ENCODE measurements at regions of chr17 and their contacts with region 1.

Region 1: GRCh38 chr17:20009302-20010098 is at the start of gene SPECC1:
- DNase-seq: peak; percentile 71
- H3K4me3 ChIP-seq: peak within 1 kb of the TSS; percentile 34 to 59 (median 39)
- H3K27ac ChIP-seq: no peak within 1 kb of the TSS
- H3K4me1 ChIP-seq: peaks cover 9% of the 10 kb centered on the region
- H3K27me3 ChIP-seq: peaks cover 17 to 50% of the 10 kb centered on the region in 2 experiments
- CTCF ChIP-seq: peak; percentile 88 to 97
- POLR2A ChIP-seq: no peak
- total RNA-seq, gene SPECC1: 15.0 and 20.4 TPM in 2 replicates

Region 2: DNA sequence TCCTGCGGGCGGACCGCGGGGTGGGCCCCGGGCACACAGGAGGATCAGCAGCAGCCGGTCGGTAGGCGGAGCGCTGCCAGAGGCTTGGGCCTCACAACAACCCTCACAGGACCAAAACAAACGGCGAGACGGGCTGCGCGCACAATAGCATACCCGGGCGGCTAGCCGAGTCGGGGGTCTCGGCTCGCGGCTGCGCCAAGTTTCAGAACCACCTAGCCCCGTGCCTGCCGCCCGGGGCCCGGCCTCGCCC is 142.5 kb before region 1 on chr17:
- CTCF ChIA-PET with region 1: interaction called, 6 read pairs
- POLR2A ChIA-PET with region 1: no interaction called
- dilution Hi-C with region 1: no loop called
- intact Hi-C with region 1: loop called (anchors 1 kb)
- DNase-seq: peak; percentile 71
- H3K4me3 ChIP-seq: peak overlapping the region; percentile 87 to 97 (median 95)
- H3K27ac ChIP-seq: peak overlapping the region; percentile 64
- H3K4me1 ChIP-seq: peaks cover 6% of the 10 kb centered on the region
- H3K27me3 ChIP-seq: no peaks in the 10 kb centered on the region
- CTCF ChIP-seq: peak; percentile 10 to 46
- POLR2A ChIP-seq: no peak

Region 3: DNA sequence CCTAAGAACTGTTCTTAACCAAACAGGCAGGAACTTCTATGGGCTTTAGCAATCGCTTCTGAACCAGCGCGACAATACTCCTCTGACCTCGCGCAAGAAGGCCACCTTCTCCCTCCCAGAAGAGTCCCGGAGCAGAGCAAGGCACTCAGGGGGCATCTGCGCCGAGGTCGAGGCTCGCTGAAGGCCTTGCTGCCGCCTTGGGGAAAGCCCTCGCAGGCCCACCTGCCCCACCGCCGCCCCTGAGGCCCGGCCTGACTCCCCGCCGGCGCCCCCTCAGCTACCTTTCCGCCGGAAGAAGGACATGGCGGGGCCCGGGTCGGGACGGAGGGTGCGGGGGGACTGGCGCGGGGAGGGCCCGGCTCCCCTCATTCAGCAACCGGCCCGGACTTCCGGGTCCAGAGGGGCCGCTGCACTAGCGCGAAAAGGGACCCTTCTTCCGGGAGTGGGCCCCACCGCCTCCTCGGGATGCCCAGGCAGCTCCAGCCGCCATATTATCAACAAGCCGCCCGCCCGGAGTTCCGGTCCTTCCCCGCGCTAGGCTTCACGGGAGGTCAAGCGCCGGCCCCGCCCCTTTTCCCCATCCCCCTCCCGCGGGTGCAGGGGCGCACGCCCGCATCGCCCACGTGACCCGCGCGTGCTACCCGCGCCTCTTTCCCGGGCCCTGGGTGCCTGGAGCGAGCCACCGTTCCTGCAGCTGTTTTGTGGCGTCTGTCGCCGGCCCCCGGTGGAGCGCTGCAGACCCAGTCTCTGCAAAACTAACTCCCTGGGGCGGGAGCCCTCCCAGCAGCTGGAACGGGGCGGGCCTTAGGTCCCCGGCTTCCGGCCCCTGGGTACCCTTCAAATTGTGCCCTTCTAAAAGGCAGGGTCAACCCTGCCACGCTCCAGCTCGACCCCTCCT is 31.9 kb before region 1 on chr17 and contains the start of gene AKAP10:
- CTCF ChIA-PET with region 1: interaction called, 10 read pairs
- POLR2A ChIA-PET with region 1: interaction called, 3 read pairs
- dilution Hi-C with region 1: no loop called
- intact Hi-C with region 1: no loop called
- DNase-seq: peak; percentile 79
- H3K4me3 ChIP-seq: peak within 1 kb of the TSS; percentile 58 to 95 (median 82)
- H3K27ac ChIP-seq: peak within 1 kb of the TSS; percentile 70
- H3K4me1 ChIP-seq: peaks cover 7% of the 10 kb centered on the region
- H3K27me3 ChIP-seq: no peaks in the 10 kb centered on the region
- CTCF ChIP-seq: no peak
- POLR2A ChIP-seq: peak; percentile 84
- total RNA-seq, gene AKAP10: 25.3 and 27.1 TPM in 2 replicates

Region 4: DNA sequence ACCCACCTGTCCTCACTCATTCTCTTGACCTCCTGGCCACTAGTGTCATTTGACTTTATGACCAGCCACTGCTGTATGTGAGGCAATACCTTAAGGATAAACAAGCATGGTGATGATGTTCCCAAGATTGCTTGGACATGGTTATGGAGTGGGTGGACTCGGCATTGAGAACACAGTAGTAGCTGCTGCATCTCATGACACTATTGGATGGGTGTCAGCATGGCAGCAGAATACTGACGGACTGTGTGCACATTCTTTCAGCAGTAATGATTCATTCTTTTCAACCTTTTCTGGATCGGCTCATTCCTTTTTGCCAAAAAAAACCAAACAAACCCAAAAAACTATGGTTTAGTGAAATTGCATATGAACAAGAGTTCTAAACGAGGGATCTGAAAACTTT is 13.2 kb after region 1 on chr17:
- CTCF ChIA-PET with region 1: interaction called, 10 read pairs
- POLR2A ChIA-PET with region 1: no interaction called
- dilution Hi-C with region 1: no loop called
- intact Hi-C with region 1: no loop called
- DNase-seq: no peak
- H3K4me3 ChIP-seq: no peak overlapping the region
- H3K27ac ChIP-seq: no peak overlapping the region
- H3K4me1 ChIP-seq: no peaks in the 10 kb centered on the region
- H3K27me3 ChIP-seq: peaks cover 0 to 2% of the 10 kb centered on the region in 2 experiments
- CTCF ChIP-seq: no peak
- POLR2A ChIP-seq: no peak

Region 5: GRCh38 chr17:20121359-20122253 is 112.1 kb after region 1 on chr17:
- CTCF ChIA-PET with region 1: interaction called, 3 read pairs
- POLR2A ChIA-PET with region 1: no interaction called
- dilution Hi-C with region 1: no loop called
- intact Hi-C with region 1: loop called (anchors 5 kb)
- DNase-seq: peak; percentile 52
- H3K4me3 ChIP-seq: no peak overlapping the region
- H3K27ac ChIP-seq: no peak overlapping the region
- H3K4me1 ChIP-seq: no peaks in the 10 kb centered on the region
- H3K27me3 ChIP-seq: no peaks in the 10 kb centered on the region
- CTCF ChIP-seq: peak; percentile 73 to 82
- POLR2A ChIP-seq: no peak

Measured in endothelial cell of umbilical vein (primary cell).